Activated CD4-positive, alpha-beta T cell treated with anti-CD3 and anti-CD28 coated beads for 36 hours (primary cell): ENCODE measurements at regions of chr2 and their contacts with region 1.

Region 1: DNA sequence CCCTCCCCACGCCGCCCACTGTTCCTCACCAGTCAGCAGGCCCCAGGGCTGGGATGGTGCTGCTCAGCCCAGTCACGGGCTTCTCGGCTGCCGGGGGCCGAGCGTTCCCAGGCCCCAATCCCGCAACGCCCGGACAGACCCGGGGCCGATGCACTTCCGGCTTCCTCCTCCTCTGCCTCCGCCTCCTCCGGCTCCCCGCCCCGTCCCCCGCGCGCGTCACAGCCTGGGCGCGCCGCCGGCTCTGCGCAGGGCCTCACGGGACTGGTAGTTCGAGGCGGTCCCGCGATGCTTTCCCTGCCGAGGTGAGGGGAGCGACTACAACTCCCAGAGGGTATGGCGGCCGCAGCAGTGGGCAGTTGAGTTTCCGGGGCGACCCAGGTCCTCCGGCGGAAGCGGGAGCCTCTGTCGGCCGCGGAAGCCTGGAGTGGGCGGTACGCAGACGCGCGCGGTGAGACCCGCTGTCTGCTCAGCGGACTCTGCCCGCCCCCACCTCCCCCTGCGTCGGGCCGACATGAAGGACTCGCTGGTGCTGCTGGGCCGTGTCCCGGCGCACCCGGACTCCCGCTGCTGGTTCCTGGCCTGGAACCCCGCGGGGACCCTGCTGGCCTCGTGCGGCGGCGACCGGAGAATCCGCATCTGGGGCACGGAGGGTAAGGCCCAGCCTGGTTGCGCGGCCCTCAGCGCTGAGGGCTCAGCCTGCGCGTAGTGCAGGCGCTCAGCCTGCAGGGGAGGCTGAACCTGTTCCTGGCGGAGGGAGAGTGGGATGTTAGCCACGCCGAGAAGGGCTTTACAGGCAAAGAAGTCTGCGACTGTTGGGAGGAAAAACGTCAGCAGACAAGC is at the starts of genes CIAO1 and TMEM127:
- DNase-seq: peak; percentile 99
- ATAC-seq: peak; percentile 94
- H3K4me3 Mint-ChIP-seq: peak within 1 kb of the TSS; percentile 99
- H3K27ac Mint-ChIP-seq: peak within 1 kb of the TSS; percentile 99
- H3K4me1 Mint-ChIP-seq: peaks cover 57% of the 10 kb centered on the region
- H3K27me3 Mint-ChIP-seq: no peaks in the 10 kb centered on the region
- total RNA-seq, gene CIAO1: 72.1 to 77.6 TPM
- total RNA-seq, gene TMEM127: 16.6 to 17.9 TPM

Region 2: DNA sequence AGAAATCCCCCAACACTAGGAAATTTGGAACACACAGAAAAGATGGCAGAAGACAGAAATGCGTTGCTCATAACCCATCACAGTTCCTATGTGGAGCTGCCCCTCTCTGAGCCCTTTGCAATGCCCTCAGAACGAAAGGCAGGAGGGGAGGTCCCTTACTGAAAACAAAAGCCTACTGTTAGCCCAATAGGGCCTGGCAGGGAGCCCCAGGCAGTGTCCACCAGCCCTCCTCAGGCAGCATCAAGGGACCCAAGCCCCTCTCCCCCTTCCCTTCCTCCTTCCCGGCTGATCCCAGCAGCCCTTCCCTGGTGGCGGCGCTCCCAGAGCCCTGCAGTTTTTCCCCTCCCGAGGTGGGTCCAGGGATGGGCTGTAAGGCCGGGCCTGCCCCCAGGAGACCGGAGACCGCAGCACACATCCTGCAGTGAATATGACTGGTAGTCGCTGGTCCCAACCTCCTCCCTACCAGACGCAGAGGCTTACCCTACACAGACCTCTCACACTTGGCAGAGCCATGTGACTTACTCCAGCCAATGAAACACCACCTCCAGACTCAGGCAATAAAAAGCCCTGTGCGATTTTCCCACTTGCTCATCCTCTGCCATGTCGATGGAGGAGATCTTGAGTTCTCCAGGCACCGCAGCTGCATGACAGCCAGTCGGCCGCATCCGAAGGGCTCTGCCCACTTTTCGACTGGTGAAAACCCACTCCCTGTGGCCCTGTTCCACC is 101.4 kb before region 1 on chr2:
- CTCF ChIA-PET with region 1: no interaction called
- POLR2A ChIA-PET with region 1: no interaction called
- intact Hi-C with region 1: loop called in 1 of 2 experiments (anchors 1 kb)
- DNase-seq: peak; percentile 88
- ATAC-seq: peak; percentile 85
- H3K4me3 Mint-ChIP-seq: peak overlapping the region; percentile 82
- H3K27ac Mint-ChIP-seq: peak overlapping the region; percentile 100
- H3K4me1 Mint-ChIP-seq: peaks cover 80% of the 10 kb centered on the region
- H3K27me3 Mint-ChIP-seq: no peaks in the 10 kb centered on the region

Region 3: GRCh38 chr2:96305091-96305978 is 39.3 kb after region 1 on chr2 and contains the start of gene SNRNP200:
- CTCF ChIA-PET with region 1: interaction called, 3 read pairs
- POLR2A ChIA-PET with region 1: no interaction called
- intact Hi-C with region 1: loop called (anchors 1 kb)
- DNase-seq: peak; percentile 96
- ATAC-seq: peak; percentile 97
- H3K4me3 Mint-ChIP-seq: peak within 1 kb of the TSS; percentile 100
- H3K27ac Mint-ChIP-seq: peak within 1 kb of the TSS; percentile 99
- H3K4me1 Mint-ChIP-seq: peaks cover 46% of the 10 kb centered on the region
- H3K27me3 Mint-ChIP-seq: no peaks in the 10 kb centered on the region
- total RNA-seq, gene SNRNP200: 176 to 198 TPM

Region 4: GRCh38 chr2:96509114-96509846 is 243.2 kb after region 1 on chr2:
- CTCF ChIA-PET with region 1: interaction called, 3 read pairs
- POLR2A ChIA-PET with region 1: no interaction called
- intact Hi-C with region 1: loop called (anchors 1 to 5 kb)
- DNase-seq: peak; percentile 87
- ATAC-seq: peak; percentile 58
- H3K4me3 Mint-ChIP-seq: no peak overlapping the region
- H3K27ac Mint-ChIP-seq: peak overlapping the region; percentile 39
- H3K4me1 Mint-ChIP-seq: peaks cover 18% of the 10 kb centered on the region
- H3K27me3 Mint-ChIP-seq: peaks cover 12% of the 10 kb centered on the region

Region 5: GRCh38 chr2:96760036-96760985 is 494.3 kb after region 1 on chr2 and contains the start of gene CNNM4:
- CTCF ChIA-PET with region 1: no interaction called
- POLR2A ChIA-PET with region 1: no interaction called
- intact Hi-C with region 1: loop called in 1 of 2 experiments (anchors 2 kb)
- DNase-seq: peak; percentile 96
- ATAC-seq: peak; percentile 93
- H3K4me3 Mint-ChIP-seq: peak within 1 kb of the TSS; percentile 75
- H3K27ac Mint-ChIP-seq: peak within 1 kb of the TSS; percentile 82
- H3K4me1 Mint-ChIP-seq: peaks cover 43% of the 10 kb centered on the region
- H3K27me3 Mint-ChIP-seq: no peaks in the 10 kb centered on the region
- total RNA-seq, gene CNNM4: 7.1 to 11.3 TPM